ENCODE measurements at regions of chr1 and their contacts with region 1.

Region 1: DNA sequence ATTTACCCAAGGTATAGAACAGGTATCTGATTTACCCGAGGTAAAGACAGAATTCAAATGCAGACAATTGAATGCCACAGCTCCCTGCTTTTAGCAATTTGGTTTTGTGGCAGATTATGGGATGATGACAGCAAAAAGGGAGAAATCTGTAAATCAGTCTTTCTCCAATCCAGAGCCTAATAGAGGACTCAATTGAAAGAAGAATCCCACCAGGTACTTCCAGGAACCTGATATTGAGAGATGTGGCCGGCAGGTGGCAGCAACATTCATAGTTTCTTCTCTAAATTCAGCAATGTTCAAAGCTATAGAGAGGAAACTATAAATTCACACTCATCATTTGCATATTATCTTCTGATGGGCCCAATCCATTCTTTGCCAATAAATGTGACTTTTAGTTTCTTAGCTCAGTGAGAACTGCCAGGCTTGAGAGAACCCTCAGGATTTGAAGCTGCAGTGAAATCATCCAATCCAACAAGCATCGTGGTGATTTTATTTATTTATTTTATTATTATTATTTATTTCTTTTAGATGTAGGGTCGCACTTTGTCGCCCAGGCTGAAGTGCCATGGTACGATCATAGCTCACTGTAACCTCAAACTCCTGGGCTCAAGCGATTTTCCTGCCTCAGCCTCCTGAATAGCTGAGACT is 9.8 kb upstream of the PHACTR4 start:
- DNase-seq: peak; percentile 69
- CTCF ChIP-seq: peak; percentile 57

Region 2: GRCh38 chr1:28280501-28280900 is 79.2 kb before region 1 on chr1:
- CTCF ChIA-PET with region 1: no interaction called
- POLR2A ChIA-PET with region 1: no interaction called
- DNase-seq: no peak
- CTCF ChIP-seq: no peak

Region 3: GRCh38 chr1:28329395-28330153 is 30.1 kb before region 1 on chr1:
- CTCF ChIA-PET with region 1: interaction called, 13 read pairs
- POLR2A ChIA-PET with region 1: no interaction called
- DNase-seq: no peak
- CTCF ChIP-seq: no peak

Measured in GM10248 (cell line).